Transverse colon (tissue), 4 donors: ENCODE measurements at regions of chr5 and their contacts with region 1.

Region 1: DNA sequence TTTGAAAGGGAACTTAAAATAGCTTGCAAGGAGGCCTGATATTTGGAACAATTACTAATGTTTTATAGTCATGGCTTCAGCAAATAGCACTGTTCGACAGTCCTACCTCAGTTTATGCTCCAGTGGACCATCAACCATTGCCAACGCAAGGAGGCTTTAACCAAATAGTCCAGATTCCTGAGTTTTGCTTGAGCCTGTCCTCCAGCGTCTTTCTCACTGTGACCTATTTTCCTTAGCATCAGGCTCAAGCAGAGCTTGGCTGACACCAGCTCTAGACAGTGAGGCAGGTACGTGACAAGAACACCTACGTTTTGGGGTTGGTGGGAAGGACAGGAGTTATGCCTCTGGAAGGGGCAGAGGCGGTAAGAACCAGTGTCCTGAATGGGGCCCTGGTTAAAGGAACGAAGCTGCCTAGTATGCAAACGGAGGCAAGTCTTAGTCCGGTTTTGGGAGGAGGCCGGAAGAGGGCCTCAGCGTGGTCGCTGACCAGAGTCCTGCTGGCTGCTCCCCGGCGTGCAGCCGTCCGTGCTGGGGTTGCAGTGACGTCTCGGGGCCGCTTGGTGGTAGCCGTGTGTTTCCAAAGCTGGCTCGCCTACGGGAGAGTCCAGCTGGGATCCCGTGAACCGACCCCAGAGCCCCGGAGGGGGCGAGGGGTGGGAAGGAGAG is 998 bp upstream of the FGF18 start:
- DNase-seq: peak; percentile 71
- H3K4me3 ChIP-seq: peak overlapping the region in 2 of 4 donors; percentile 40 to 48
- H3K27ac ChIP-seq: no peak overlapping the region
- H3K4me1 ChIP-seq: peaks cover 19 to 30% (median 27%) of the 10 kb centered on the region in 4 donors
- H3K27me3 ChIP-seq: peaks cover 29% of the 10 kb centered on the region
- CTCF ChIP-seq: peak; percentile 87 to 94 (median 91)
- EP300 ChIP-seq: no peak
- POLR2A ChIP-seq: no peak

Region 2: DNA sequence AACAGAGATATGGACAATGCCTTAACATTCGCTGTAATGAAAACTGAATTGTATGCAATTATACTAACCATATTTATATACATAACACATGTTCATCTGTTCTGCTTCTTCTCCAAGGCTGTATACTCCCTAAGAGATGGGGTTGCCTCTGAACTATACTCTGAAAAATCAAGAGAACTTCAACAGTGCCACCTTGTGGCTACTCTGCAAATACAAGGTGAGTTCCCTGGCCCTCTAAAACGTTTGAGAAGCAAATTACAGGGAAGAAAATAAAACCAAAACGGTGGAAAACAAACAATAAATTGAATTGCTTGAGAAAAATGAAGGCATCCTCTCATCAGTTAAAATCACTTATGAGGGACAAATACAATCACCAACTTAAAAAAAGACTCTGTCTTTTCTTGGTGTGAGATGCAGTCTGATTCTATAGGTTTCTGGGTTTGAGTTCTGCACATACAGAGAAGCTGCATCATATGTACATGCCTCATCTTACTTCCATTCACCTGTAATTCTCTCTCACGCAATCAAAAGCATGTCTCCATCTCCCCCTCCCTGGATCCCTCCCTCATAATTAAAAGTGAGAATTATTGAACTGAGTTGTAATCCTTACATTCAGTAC is 489.4 kb after region 1 on chr5:
- in situ Hi-C with region 1: loop called in 2 of 4 experiments (anchors 10 to 25 kb)
- intact Hi-C with region 1: loop called (anchors 2 kb)
- DNase-seq: peak; percentile 15
- H3K4me3 ChIP-seq: no peak overlapping the region
- H3K27ac ChIP-seq: no peak overlapping the region
- H3K4me1 ChIP-seq: peaks cover 0 to 12% (median 1%) of the 10 kb centered on the region in 4 donors
- H3K27me3 ChIP-seq: no peaks in the 10 kb centered on the region
- CTCF ChIP-seq: peak; percentile 63 to 82 (median 77)
- EP300 ChIP-seq: no peak
- POLR2A ChIP-seq: no peak

Region 3: GRCh38 chr5:171913987-171914273 is 495.5 kb after region 1 on chr5:
- in situ Hi-C with region 1: loop called in 2 of 4 experiments (anchors 10 to 25 kb)
- intact Hi-C with region 1: loop called (anchors 2 kb)
- DNase-seq: no peak
- H3K4me3 ChIP-seq: no peak overlapping the region
- H3K27ac ChIP-seq: no peak overlapping the region
- H3K4me1 ChIP-seq: peaks cover 2 to 26% (median 6%) of the 10 kb centered on the region in 4 donors
- H3K27me3 ChIP-seq: no peaks in the 10 kb centered on the region
- CTCF ChIP-seq: no peak
- EP300 ChIP-seq: no peak
- POLR2A ChIP-seq: no peak

Region 4: DNA sequence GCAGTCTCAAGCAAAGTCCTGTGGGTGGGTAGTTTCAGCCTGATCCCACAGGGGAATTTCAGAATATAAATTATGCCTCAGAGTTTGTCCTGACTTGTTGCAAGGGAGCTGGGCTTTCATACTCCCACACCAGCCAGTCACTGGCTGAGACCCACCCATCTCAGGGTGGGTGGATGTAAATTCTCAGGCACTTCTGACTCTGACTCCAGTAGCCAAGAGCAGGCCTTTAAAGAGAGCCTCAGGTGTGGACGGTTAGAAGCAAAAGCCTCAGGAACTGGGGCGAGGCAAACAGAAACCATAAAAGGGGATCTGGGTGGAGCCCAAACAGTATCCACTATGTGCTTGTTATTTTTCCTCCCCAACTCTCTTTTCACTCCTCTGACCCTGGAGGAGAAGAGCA is 616.6 kb after region 1 on chr5:
- in situ Hi-C with region 1: loop called (anchors 25 kb)
- intact Hi-C with region 1: no loop called
- DNase-seq: no peak
- H3K4me3 ChIP-seq: no peak overlapping the region
- H3K27ac ChIP-seq: no peak overlapping the region
- H3K4me1 ChIP-seq: no peaks in the 10 kb centered on the region
- H3K27me3 ChIP-seq: no peaks in the 10 kb centered on the region
- CTCF ChIP-seq: no peak
- EP300 ChIP-seq: no peak
- POLR2A ChIP-seq: no peak